Uterus (tissue), 4 donors: ENCODE measurements at regions of chr1 and their contacts with region 1.

Region 1: GRCh38 chr1:241675983-241676382 is 23.9 kb downstream of the WDR64 start:
- DNase-seq: no peak
- H3K4me3 ChIP-seq: no peak overlapping the region
- H3K27ac ChIP-seq: no peak overlapping the region
- H3K4me1 ChIP-seq: no peaks in the 10 kb centered on the region
- H3K27me3 ChIP-seq: no peaks in the 10 kb centered on the region
- CTCF ChIP-seq: no peak
- POLR2A ChIP-seq: no peak

Region 2: DNA sequence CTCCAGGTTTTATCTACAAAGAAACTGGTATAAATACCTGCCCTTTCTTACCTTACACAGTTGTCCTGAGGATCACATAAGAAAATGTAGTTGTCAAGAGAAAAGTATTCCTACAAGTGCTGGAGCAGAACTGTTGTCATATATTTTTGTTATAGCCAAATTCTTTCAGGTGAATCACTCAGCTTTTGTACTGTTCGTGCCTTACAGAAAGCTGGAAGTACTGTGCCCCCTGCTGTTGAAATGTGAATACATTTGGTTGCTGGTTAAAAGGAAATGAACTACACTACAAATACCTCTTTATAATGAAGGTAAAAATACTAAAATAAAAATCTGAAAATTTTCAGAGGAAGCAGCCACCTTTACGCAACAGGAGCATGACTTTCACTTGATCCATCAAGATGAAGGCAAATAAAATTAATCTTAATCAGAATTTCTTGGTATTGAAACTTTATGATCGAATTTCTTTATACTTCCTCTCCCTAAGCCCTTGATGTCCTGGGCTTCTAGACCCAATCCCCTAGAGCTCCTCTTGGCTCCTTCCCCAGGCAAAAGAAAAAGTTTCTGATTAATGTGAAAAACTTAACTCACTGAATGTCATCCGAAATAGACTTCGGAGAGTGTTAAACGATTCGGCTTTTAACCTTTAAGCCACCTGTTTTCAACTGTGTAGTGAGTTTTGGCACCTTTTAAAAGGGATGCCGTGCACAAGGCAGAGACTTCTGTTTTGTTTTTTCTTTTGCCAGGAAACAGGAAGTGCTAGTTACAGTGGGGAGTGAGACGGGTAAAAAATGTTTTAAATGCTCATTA is 48.3 kb before region 1 on chr1:
- intact Hi-C with region 1: no loop called
- DNase-seq: no peak
- H3K4me3 ChIP-seq: no peak overlapping the region
- H3K27ac ChIP-seq: no peak overlapping the region
- H3K4me1 ChIP-seq: no peaks in the 10 kb centered on the region
- H3K27me3 ChIP-seq: no peaks in the 10 kb centered on the region
- CTCF ChIP-seq: peak in 2 of 4 experiments; percentile 19 to 29
- POLR2A ChIP-seq: no peak

Region 3: DNA sequence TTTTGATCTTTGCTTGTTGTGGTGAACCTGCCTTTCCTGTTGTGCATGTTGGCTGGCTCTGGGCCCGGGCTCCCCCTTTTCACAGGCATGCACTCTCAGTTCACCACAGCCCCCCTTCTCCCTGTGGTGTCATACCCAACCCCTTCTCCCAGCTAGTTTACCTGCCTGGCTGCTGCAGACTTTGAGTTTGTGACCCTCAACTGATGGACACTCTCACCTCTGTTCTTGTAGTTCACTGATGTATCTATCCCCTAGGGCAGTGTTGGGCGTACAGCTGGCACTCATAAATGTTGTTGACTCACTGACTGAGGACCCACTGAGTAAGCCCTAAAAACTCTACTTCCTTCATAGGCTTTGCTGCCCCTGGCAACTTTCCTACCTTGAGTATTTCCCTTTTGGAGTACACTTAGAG is 31.0 kb after region 1 on chr1:
- intact Hi-C with region 1: loop called (anchors 2 kb)
- DNase-seq: no peak
- H3K4me3 ChIP-seq: no peak overlapping the region
- H3K27ac ChIP-seq: no peak overlapping the region
- H3K4me1 ChIP-seq: no peaks in the 10 kb centered on the region
- H3K27me3 ChIP-seq: no peaks in the 10 kb centered on the region
- CTCF ChIP-seq: no peak
- POLR2A ChIP-seq: no peak

Region 4: DNA sequence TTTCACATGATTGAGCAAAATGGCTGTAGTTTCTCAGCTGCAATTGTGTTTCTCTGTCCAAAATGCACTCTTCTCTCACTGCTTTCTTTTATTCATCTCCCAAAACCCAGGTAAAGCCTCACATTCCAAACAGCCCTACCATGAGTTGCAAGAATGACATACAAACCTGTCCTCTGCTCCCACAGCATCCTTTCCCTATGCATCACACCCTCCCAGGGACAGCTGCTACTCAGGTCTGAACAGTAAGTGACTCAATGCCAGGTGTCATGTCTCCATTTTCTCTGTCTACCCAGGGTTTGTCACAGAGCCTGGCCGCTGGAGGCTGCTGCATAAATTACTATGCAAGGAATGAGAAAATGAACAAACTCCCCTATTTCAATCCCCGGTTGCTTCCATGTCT is 730.0 kb after region 1 on chr1:
- intact Hi-C with region 1: no loop called
- DNase-seq: no peak
- H3K4me3 ChIP-seq: no peak overlapping the region
- H3K27ac ChIP-seq: no peak overlapping the region
- H3K4me1 ChIP-seq: no peaks in the 10 kb centered on the region
- H3K27me3 ChIP-seq: no peaks in the 10 kb centered on the region
- CTCF ChIP-seq: no peak
- POLR2A ChIP-seq: no peak